ENCODE measurements at regions of chr7 and their contacts with region 1.

Region 1: DNA sequence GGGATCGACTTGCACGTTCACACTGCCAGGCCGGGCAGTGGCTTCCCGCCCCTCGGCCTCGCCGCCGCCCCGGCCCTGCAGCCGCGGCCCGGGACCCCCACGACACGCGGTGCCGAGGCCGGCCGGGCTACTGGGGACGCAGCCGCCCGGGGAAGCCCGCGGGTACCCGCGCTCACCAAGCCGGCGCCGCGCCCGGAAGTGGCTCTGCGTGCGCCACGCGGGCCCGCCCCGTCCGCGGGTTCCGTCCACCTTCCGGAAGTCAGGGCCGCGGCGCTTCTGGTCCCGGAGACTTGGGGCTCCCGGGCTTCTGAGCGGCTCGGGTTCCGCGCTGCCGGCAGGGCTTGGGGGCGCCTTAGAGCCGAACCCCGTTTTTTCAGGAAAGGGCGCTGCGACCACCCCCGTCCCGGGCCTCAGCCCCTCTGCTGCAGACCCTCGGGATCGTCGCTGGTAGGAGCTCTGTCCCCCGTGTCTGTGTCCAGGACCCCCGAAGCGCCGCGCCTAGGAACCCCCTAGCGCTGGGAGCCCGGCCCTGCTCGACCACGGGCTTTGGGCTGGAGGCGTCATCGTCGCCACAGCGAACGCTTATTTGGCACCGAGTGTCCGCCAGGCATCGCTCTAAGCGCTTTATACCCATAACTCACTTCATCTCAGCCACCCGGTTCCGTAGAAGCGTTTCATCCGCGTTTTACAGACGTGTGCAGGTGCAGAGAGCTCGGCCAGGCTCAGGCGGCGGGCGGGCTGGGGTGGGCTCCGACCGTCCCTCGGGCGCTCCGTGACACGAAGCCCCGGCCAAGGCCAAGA is at the start of gene PSMG3:
- DNase-seq: peak; percentile 85 to 98
- H3K4me3 ChIP-seq: peak within 1 kb of the TSS; percentile 84
- CTCF ChIP-seq: no peak
- POLR2A ChIP-seq: peak in 1 of 2 donors; percentile 5
- total RNA-seq, gene PSMG3: 38.2 to 73.2 (median 60.7) TPM

Region 2: DNA sequence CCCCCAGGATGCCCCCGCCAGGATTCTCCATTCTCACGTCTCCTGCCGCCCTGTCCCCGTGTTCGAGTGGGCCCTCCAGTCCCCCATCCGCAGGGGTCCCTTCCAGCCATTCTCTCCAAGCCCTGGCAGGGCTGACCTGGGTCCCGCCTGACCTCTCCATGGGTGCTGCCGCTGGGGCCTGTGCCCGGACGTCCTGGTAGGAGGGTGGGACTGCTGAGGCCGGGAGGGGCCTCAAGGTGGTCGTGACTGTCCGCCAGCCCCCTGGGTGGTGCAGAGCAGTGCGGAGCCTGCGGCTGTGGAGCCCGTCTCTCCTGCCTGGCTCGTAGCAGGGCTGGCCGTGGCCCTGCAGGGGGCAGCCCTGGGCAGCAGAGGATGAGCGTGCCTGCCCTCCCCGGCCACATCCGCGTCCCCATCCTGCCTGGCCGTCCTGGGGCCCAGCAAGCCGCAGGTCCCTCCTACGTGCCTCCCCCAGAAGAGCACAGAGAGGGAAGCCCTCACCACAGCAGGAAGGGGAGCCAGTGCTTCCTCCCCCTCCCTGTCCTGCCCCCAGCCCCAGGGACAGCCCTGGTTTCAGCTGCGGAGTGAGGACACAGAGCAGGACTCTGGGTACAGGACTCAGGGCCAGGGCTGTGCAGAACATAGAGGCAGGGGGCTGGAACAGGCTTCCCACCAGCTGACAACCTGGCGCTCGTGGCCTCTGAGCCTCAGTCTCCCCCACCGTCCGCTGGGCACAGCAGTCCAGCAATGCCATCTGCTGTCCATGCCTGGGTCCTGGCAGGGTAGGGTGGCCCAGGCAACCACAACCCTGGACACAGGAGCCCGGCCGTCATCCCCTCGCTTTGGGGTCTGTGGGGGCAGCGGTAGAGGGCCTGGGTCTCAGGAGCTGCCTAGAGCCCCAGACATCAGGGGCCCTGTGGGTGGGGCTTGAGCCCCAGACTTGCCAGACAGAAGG is 907.7 kb after region 1 on chr7:
- intact Hi-C with region 1: loop called (anchors 10 kb)
- DNase-seq: peak in 1 of 2 donors; percentile 91
- H3K4me3 ChIP-seq: no peak overlapping the region
- CTCF ChIP-seq: peak in 1 of 3 donors; percentile 25
- POLR2A ChIP-seq: no peak

Measured in lower leg skin (tissue), 4 donors.